ENCODE measurements at regions of chr12 and their contacts with region 1.

Region 1: GRCh38 chr12:62603061-62603810 is 136.6 kb downstream of the MON2 start:
- H3K4me3 Mint-ChIP-seq: peak overlapping the region; percentile 96
- H3K27ac Mint-ChIP-seq: peak overlapping the region; percentile 100
- H3K4me1 Mint-ChIP-seq: peaks cover 30% of the 10 kb centered on the region
- H3K27me3 Mint-ChIP-seq: no peaks in the 10 kb centered on the region

Region 2: DNA sequence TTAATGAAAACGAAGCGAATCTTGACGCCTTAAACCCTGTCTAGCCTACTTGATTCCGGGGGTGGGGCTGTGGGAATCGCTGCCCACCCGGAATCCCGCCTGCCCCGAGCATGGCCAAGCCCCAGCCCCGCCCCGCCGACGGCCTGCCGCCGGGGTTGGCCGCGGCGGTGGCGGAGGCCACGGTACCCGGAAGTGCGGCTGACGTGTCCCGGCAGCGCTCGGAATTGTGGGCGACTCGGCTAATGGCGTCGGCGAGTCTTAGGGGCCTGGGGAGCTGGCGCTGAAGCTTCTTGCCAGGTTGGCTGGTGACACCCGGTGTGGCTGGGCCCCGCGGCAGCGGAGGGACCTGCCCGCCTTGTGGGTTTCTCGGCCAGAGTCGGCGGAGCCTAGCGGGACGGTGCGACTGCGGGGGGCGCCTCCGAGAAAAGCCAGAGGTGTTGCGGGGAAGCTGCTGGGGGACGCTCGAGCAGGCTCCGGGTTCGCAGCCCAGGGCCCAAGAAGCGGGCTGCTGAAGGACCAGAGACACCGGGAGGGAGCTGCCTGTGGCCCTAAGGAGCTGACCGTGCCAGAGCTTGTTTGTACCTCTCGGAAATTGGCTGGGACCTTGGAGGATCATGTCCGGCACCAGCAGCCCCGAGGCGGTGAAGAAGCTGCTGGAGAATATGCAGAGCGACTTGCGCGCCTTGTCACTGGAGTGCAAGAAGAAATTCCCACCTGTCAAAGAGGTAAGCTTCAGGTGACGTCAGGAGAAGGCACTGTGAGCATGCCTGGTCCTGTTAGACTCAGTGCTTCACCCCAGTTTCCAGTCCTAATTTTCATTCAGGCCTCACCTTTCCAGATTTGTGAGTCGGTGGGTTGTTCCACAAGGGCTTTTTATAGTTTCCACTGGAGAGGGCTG is 136.4 kb before region 1 on chr12 and contains the start of gene MON2:
- intact Hi-C with region 1: loop called (anchors 5 kb)
- H3K4me3 Mint-ChIP-seq: peak within 1 kb of the TSS; percentile 99
- H3K27ac Mint-ChIP-seq: peak within 1 kb of the TSS; percentile 96
- H3K4me1 Mint-ChIP-seq: peaks cover 20% of the 10 kb centered on the region
- H3K27me3 Mint-ChIP-seq: peaks cover 3% of the 10 kb centered on the region

Region 3: DNA sequence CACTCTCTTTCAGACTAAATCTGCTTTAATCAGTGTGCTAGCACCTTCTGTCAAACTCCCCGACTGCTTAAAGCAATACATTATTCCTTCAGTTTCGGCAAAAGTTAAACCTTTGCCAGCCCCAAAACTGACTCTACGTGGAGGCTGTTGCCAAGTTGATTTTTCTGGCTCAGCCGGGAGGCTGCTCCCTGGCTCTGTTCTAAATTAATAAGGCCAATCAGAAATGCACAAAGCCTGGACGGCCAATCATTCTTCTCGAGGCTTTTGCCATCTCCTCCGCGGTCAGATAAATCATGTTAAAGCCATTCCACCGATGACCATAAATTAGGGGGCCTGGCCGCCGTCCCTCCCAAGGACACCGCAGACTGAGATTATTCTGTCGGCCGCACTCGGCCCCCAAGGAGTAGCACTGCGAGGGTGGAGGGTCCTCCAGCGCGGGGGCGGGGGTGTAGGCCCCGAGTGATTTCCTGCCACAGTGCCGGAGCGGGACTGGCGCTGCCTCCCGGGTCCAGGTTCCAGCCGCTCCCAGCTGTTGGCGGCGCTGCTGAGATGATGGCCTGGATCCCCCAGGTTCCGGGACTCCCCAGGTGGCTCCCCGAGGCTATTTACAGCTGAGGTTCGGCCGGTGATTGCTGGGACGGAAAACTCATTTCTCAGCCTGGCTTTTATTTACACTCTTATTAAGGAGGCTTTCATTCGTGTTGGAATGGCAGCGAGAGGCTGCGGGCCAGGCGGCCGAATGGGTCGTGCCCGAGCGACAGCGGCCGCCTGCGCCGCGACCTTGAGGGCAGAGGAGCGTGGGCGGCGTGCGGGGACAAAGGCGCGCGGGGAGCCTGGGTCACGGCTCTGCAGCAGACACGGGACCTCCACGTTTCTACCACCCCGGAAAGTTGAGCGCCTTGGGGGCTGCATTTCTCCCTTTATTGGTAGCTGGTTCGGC is 28.5 kb after region 1 on chr12:
- intact Hi-C with region 1: no loop called
- H3K4me3 Mint-ChIP-seq: peak overlapping the region; percentile 84
- H3K27ac Mint-ChIP-seq: peak overlapping the region; percentile 68
- H3K4me1 Mint-ChIP-seq: peaks cover 23% of the 10 kb centered on the region
- H3K27me3 Mint-ChIP-seq: peaks cover 57% of the 10 kb centered on the region

Region 4: GRCh38 chr12:62724947-62725447 is 121.8 kb after region 1 on chr12:
- intact Hi-C with region 1: loop called (anchors 10 kb)
- H3K4me3 Mint-ChIP-seq: no peak overlapping the region
- H3K27ac Mint-ChIP-seq: no peak overlapping the region
- H3K4me1 Mint-ChIP-seq: peaks cover 38% of the 10 kb centered on the region
- H3K27me3 Mint-ChIP-seq: no peaks in the 10 kb centered on the region

Region 5: GRCh38 chr12:62738616-62739015 is 135.4 kb after region 1 on chr12:
- intact Hi-C with region 1: no loop called
- H3K4me3 Mint-ChIP-seq: no peak overlapping the region
- H3K27ac Mint-ChIP-seq: no peak overlapping the region
- H3K4me1 Mint-ChIP-seq: peaks cover 11% of the 10 kb centered on the region
- H3K27me3 Mint-ChIP-seq: no peaks in the 10 kb centered on the region

Region 6: GRCh38 chr12:62793256-62794217 is 190.3 kb after region 1 on chr12:
- intact Hi-C with region 1: loop called (anchors 5 kb)
- H3K4me3 Mint-ChIP-seq: no peak overlapping the region
- H3K27ac Mint-ChIP-seq: no peak overlapping the region
- H3K4me1 Mint-ChIP-seq: peaks cover 20% of the 10 kb centered on the region
- H3K27me3 Mint-ChIP-seq: no peaks in the 10 kb centered on the region

Region 7: DNA sequence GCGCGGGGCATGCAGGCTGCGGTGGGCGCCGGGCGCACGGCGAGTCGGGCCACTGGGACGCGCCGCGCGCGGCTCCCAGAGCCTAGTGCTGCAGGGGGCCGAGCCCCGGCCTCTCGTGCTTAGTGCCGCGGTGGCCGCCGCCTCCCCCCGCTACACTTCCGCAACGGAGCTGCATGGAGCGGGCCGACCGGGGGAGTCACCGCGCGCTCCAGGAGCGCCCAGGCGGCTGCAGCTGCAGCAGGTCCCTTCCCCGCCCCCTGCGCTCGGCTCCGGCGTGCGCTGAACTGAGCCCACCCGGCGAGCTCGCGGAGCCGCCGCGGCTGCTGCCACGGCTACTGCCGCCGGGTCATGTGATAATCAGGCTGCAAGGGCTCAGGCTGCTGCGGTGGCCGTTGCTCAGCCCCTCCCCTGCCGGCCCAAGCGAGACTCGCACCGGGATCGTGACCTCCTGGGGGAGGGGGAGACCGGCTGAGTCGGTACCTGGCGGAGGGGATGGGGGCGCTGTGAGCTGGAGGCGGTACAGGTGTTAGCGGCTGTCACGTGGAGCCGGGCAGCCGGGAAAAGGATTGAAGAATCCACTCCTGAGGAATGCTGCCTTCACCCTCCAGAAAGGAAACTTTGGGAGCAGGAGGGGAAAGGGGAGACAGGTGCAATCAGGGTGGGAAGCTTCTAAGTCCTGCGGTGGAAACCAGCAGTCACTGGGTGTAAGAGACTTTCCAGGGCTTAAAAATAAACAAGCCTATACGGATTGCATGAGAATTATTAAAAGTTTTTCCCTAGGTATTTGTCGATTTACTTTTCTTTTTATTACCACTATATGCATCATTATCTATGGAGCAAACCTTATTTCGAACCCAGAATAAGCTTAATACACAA is 331.8 kb after region 1 on chr12 and contains the start of gene PPM1H:
- intact Hi-C with region 1: loop called (anchors 5 kb)
- H3K4me3 Mint-ChIP-seq: peak within 1 kb of the TSS; percentile 94
- H3K27ac Mint-ChIP-seq: peak within 1 kb of the TSS; percentile 83
- H3K4me1 Mint-ChIP-seq: peaks cover 28% of the 10 kb centered on the region
- H3K27me3 Mint-ChIP-seq: peaks cover 15% of the 10 kb centered on the region